ENCODE measurements at regions of chr9 and their contacts with region 1.

Region 1: GRCh38 chr9:104747558-104748358 is at the start of gene NIPSNAP3A:
- DNase-seq: peak; percentile 90
- H3K4me3 Mint-ChIP-seq: peak within 1 kb of the TSS; percentile 96
- H3K27ac Mint-ChIP-seq: peak within 1 kb of the TSS; percentile 89
- H3K4me1 Mint-ChIP-seq: peaks cover 14% of the 10 kb centered on the region
- H3K27me3 Mint-ChIP-seq: no peaks in the 10 kb centered on the region
- total RNA-seq, gene NIPSNAP3A: 11.1 to 12.5 TPM

Region 2: GRCh38 chr9:103789686-103790085 is 958.1 kb before region 1 on chr9:
- CTCF ChIA-PET with region 1: no interaction called
- POLR2A ChIA-PET with region 1: no interaction called
- intact Hi-C with region 1: loop called (anchors 10 kb)
- DNase-seq: no peak
- H3K4me3 Mint-ChIP-seq: no peak overlapping the region
- H3K27ac Mint-ChIP-seq: no peak overlapping the region
- H3K4me1 Mint-ChIP-seq: peaks cover 4% of the 10 kb centered on the region
- H3K27me3 Mint-ChIP-seq: no peaks in the 10 kb centered on the region

Region 3: DNA sequence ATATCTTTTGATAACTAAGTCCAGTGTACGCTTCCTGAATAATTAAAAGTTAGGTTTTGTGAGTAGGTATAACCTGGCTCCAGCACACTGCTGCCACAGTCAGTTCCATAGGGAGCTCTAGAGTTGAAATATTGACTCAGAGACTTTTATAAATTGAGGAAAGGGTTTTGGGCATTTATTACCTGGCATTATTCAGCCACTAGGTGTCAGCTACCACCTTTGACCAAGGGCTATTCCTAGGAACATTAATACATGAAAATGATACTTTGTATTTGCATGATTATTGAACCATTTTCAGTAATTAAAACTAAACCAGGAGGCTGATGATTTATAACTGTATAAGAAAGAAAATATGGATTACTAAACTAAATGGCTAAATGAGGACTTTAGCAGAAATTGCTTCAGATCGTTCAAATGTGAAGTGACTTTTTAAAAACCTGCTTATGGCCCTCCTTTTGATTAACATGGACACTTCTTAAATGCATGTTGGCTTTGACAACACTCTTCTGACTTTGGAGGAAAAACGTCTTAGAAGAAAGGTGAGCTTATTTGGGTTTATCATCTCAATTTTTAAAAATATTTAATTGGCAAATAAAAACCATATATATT is 570.7 kb before region 1 on chr9:
- CTCF ChIA-PET with region 1: interaction called, 4 read pairs
- POLR2A ChIA-PET with region 1: no interaction called
- intact Hi-C with region 1: loop called (anchors 10 kb)
- DNase-seq: no peak
- H3K4me3 Mint-ChIP-seq: no peak overlapping the region
- H3K27ac Mint-ChIP-seq: no peak overlapping the region
- H3K4me1 Mint-ChIP-seq: no peaks in the 10 kb centered on the region
- H3K27me3 Mint-ChIP-seq: peaks cover 1% of the 10 kb centered on the region

Region 4: DNA sequence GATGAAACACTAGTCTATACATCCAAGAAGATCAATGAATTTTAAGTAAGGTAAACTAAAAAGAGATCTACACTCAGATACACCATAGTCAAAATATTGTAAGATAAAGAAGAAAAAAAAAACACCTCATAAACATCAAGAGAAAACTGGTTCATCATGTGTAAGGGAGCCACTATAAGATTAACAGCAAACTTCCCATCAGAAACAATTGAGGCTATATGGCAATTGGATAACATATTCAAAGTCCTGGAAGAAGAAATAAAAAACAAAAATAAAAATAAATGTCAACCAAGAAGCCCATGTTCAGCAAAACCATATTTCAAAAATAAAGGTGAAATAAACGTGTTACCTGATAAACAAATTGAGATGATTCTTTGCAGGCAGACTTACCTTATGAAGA is 175.1 kb before region 1 on chr9:
- CTCF ChIA-PET with region 1: no interaction called
- POLR2A ChIA-PET with region 1: no interaction called
- intact Hi-C with region 1: no loop called
- DNase-seq: no peak
- H3K4me3 Mint-ChIP-seq: no peak overlapping the region
- H3K27ac Mint-ChIP-seq: no peak overlapping the region
- H3K4me1 Mint-ChIP-seq: no peaks in the 10 kb centered on the region
- H3K27me3 Mint-ChIP-seq: no peaks in the 10 kb centered on the region

Region 5: DNA sequence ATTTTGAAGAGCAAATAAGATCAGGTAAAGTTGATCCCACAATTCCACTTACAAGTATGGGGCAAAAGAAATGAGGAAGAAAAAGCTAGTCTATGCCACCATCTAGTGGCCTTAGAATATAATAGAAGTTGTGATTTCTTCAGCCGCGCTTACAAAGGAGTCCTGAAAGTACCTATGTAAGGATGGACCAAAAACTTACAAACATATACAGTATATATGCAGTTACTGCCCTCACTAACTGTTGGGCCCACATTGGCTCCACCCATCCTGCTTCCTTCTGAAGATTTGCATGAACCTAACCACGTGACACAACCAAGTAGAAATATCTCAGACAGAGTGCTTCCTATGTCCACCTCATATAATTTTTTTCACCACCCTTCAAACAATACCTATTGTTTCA is 65.1 kb before region 1 on chr9:
- CTCF ChIA-PET with region 1: interaction called, 4 read pairs
- POLR2A ChIA-PET with region 1: no interaction called
- intact Hi-C with region 1: loop called (anchors 1 kb)
- DNase-seq: no peak
- H3K4me3 Mint-ChIP-seq: no peak overlapping the region
- H3K27ac Mint-ChIP-seq: no peak overlapping the region
- H3K4me1 Mint-ChIP-seq: no peaks in the 10 kb centered on the region
- H3K27me3 Mint-ChIP-seq: peaks cover 4% of the 10 kb centered on the region

Region 6: DNA sequence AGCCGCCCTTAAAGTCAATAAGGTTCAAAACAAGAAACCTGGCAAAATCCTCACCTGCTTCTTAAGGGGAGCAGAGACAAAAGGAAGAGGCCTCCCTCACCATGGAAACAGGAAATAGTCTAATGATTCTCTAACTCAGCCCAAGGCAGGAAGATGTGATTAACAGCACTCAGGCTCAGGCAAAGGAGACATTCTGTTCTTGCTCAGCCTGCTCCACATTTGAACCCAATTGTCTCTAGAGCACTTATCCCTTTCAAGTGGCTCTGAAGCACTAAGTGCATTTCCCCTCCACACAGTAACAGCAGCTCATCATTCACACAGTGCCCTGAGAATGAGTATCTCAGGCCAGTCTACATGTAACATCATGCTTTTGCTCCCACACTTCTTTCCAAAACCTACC is 88.5 kb after region 1 on chr9:
- CTCF ChIA-PET with region 1: no interaction called
- POLR2A ChIA-PET with region 1: no interaction called
- intact Hi-C with region 1: no loop called
- DNase-seq: no peak
- H3K4me3 Mint-ChIP-seq: no peak overlapping the region
- H3K27ac Mint-ChIP-seq: no peak overlapping the region
- H3K4me1 Mint-ChIP-seq: peaks cover 9% of the 10 kb centered on the region
- H3K27me3 Mint-ChIP-seq: peaks cover 2% of the 10 kb centered on the region

Region 7: DNA sequence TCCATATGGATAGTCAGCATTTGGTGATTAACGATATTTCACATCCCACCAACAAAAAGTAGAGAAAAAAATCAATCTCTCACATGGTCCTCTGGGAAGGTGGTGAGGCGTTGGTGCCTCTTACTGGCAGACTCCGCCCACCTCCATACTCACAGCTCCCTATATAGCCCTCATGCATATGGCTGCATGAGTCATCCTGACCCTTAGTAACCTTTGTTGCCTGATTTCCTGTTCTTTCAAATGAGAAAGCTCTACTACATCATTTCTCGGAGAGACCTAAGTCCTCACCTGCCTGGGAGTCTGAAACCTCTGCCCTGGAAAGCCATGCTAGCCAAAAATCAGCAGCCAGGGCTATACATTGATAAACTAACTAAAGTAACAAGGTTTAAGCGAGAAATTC is 213.5 kb after region 1 on chr9:
- CTCF ChIA-PET with region 1: no interaction called
- POLR2A ChIA-PET with region 1: no interaction called
- intact Hi-C with region 1: loop called (anchors 2 kb)
- DNase-seq: peak; percentile 83
- H3K4me3 Mint-ChIP-seq: no peak overlapping the region
- H3K27ac Mint-ChIP-seq: peak overlapping the region; percentile 85
- H3K4me1 Mint-ChIP-seq: peaks cover 31% of the 10 kb centered on the region
- H3K27me3 Mint-ChIP-seq: no peaks in the 10 kb centered on the region

Region 8: DNA sequence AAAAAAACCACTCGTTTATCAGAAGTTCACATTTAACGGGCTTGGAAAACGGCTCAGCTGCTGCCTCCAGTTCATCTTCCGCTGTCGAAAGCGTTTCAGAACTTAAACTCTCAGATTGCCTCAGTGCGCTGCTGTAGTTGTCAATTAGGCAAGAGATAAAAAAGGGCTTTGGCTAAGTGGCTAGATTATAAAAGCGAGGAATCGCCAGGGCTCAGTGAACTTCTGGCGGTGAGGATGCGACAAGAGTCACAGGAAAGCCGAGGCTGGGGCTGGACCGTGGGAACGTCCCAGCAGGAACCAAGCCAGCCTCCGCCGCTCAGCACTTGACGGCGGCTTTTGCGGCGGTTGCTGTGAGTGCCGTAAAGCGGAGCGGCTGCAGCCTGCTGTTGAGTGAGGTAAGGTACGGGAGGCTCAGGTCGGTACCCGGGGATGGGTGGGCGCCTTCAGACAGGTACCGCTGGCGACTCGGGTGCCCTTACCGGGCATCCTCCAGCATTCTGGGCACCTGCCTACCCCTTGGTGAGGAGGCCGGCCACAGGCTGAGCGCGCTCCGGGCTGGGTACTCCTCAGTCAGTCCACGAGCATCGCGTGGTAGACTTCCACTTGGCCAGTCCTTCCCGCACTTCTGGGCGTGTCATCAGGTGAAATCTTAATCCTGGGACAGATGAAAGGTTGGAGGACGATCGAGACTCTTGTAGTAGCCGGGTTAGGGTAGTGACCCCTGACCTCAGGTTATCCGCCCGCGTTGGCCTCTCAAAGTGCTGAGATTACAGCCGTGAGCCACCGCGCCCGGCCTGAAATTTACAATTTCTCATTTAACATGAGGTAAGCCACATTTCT is 810.2 kb after region 1 on chr9 and contains the start of gene FKTN:
- CTCF ChIA-PET with region 1: no interaction called
- POLR2A ChIA-PET with region 1: interaction called, 3 read pairs
- intact Hi-C with region 1: loop called (anchors 5 kb)
- DNase-seq: peak; percentile 90
- H3K4me3 Mint-ChIP-seq: peak within 1 kb of the TSS; percentile 94
- H3K27ac Mint-ChIP-seq: peak within 1 kb of the TSS; percentile 52
- H3K4me1 Mint-ChIP-seq: peaks cover 21% of the 10 kb centered on the region
- H3K27me3 Mint-ChIP-seq: no peaks in the 10 kb centered on the region
- total RNA-seq, gene FKTN: 15.8 to 16.8 TPM

Measured in activated CD4-positive, alpha-beta memory T cell treated with anti-CD3 and anti-CD28 coated beads for 36 hours (primary cell).